Naive thymus-derived CD4-positive, alpha-beta T cell (primary cell): ENCODE measurements at regions of chr5 and their contacts with region 1.

Region 1: DNA sequence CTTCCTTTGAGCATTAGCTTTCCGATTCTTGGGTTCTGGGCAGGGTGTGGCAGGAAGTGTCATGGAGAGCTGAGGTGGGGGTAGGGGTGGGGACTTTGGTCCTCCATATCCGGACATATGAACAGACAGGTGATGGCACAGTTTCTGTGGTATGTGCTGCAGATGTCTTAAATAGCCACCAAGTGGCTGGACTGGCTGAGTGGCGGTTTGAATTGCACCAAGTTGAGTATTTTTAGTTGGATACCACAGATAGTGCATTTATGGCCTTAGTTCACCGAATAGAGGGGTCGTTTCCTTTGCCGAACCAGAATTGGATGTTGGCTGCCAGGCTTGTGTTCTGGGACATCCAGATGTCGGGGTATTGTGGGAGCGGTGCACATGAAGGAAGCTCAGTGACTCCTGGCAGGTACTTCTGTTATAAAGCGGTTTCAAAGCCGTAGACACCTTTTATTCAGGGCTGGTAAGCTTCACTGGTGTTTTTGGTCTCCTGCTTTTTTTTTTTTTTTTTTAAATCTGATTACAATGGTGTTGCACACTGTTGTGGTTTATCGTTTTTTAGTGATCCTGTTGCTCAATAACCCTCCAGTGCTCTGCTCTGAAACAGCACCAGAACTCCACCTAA is 15.1 kb upstream of the TNFAIP8 start:
- DNase-seq: peak in 7 of 9 donors; percentile 57 to 72 (median 64)
- ATAC-seq: peak; percentile 71
- H3K4me3 ChIP-seq: peak overlapping the region; percentile 33
- H3K4me3 Mint-ChIP-seq: peak overlapping the region; percentile 64 to 94 (median 86)
- H3K27ac ChIP-seq: peak overlapping the region; percentile 78
- H3K27ac Mint-ChIP-seq: peak overlapping the region; percentile 84 to 99 (median 94)
- H3K4me1 ChIP-seq: peaks cover 91 to 95% of the 10 kb centered on the region in 2 donors
- H3K4me1 Mint-ChIP-seq: peaks cover 78 to 98% (median 97%) of the 10 kb centered on the region in 7 donors
- H3K27me3 ChIP-seq: no peaks in the 10 kb centered on the region
- H3K27me3 Mint-ChIP-seq: no peaks in the 10 kb centered on the region

Region 2: GRCh38 chr5:119022017-119022745 is 318.5 kb before region 1 on chr5:
- CTCF ChIA-PET with region 1: interaction called, 5 read pairs
- POLR2A ChIA-PET with region 1: interaction called, 3 read pairs
- intact Hi-C with region 1: loop called in 1 of 2 experiments (anchors 5 kb)
- DNase-seq: peak in 6 of 9 donors; percentile 12 to 60 (median 54)
- ATAC-seq: peak; percentile 67
- H3K4me3 ChIP-seq: no peak overlapping the region
- H3K4me3 Mint-ChIP-seq: no peak overlapping the region
- H3K27ac ChIP-seq: no peak overlapping the region
- H3K27ac Mint-ChIP-seq: peak overlapping the region in 3 of 9 donors; percentile 46 to 60 (median 47)
- H3K4me1 ChIP-seq: no peaks in the 10 kb centered on the region
- H3K4me1 Mint-ChIP-seq: peaks cover 0 to 6% (median 2%) of the 10 kb centered on the region in 7 donors
- H3K27me3 ChIP-seq: no peaks in the 10 kb centered on the region
- H3K27me3 Mint-ChIP-seq: no peaks in the 10 kb centered on the region

Region 3: GRCh38 chr5:119274767-119275130 is 66.0 kb before region 1 on chr5:
- CTCF ChIA-PET with region 1: interaction called, 7 read pairs
- POLR2A ChIA-PET with region 1: interaction called, 58 read pairs
- intact Hi-C with region 1: loop called in 1 of 2 experiments (anchors 1 kb)
- DNase-seq: peak in 1 of 9 donors; percentile 79
- ATAC-seq: peak; percentile 45
- H3K4me3 ChIP-seq: peak overlapping the region; percentile 52
- H3K4me3 Mint-ChIP-seq: peak overlapping the region; percentile 86 to 100 (median 98)
- H3K27ac ChIP-seq: peak overlapping the region; percentile 85
- H3K27ac Mint-ChIP-seq: peak overlapping the region; percentile 73 to 99 (median 95)
- H3K4me1 ChIP-seq: peaks cover 74 to 81% of the 10 kb centered on the region in 2 donors
- H3K4me1 Mint-ChIP-seq: peaks cover 84 to 98% (median 91%) of the 10 kb centered on the region in 7 donors
- H3K27me3 ChIP-seq: no peaks in the 10 kb centered on the region
- H3K27me3 Mint-ChIP-seq: peaks cover 0 to 2% (median 0%) of the 10 kb centered on the region in 5 donors

Region 4: DNA sequence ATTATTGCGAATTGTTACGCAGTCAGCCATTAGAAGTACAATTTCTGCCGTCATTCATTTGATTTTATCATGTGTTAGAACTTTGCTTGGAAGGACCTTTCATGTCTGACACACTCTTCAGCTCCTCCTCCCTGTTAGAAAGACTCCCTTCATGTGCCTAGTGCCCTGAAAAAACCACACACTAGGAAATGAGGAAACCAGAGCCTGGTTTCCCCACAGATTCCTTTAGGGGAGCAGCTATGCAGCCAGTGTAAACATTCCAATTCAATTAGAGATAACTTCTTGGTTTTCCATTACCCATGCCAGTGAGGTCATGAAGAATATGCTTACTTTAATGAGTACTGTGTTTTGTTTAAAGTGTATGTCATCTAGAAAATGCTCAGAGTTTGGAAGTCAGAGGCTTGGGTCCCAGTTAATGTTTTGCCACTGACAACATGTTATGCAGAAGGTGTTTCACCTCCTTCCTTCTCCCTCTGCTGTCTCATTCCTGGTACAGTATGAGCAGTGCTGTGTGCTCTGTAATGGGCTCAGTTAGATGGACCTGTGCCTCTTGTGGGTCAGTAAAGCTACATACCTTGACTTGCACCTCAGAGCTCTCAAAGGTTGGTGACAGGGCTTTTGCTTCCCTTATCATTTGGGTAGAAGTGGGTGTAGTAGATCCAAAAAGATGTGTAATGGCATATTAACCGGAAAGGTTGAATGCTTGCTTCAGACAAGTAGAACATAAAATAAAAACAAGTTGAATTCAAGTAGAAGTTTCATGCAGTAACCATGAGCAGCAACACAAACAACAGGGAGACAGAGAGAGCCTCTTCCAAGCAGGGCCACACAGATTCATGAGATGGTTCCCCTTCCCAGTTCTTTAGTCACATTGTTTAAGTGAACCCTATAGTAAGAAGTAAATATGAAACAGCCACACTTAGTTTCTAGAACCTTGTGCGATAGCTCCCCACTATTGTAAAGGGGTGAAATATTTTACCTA is 37.5 kb before region 1 on chr5:
- CTCF ChIA-PET with region 1: interaction called, 5 read pairs
- POLR2A ChIA-PET with region 1: interaction called, 33 read pairs
- intact Hi-C with region 1: loop called in 1 of 2 experiments (anchors 5 kb)
- DNase-seq: peak in 3 of 9 donors; percentile 36 to 66 (median 51)
- ATAC-seq: peak; percentile 78
- H3K4me3 ChIP-seq: peak overlapping the region; percentile 24
- H3K4me3 Mint-ChIP-seq: peak overlapping the region; percentile 63 to 93 (median 76)
- H3K27ac ChIP-seq: peak overlapping the region; percentile 74
- H3K27ac Mint-ChIP-seq: peak overlapping the region; percentile 85 to 100 (median 98)
- H3K4me1 ChIP-seq: peaks cover 81 to 82% of the 10 kb centered on the region in 2 donors
- H3K4me1 Mint-ChIP-seq: peaks cover 57 to 97% (median 94%) of the 10 kb centered on the region in 7 donors
- H3K27me3 ChIP-seq: no peaks in the 10 kb centered on the region
- H3K27me3 Mint-ChIP-seq: no peaks in the 10 kb centered on the region

Region 5: GRCh38 chr5:119328753-119329602 is 11.7 kb before region 1 on chr5:
- CTCF ChIA-PET with region 1: interaction called, 6 read pairs
- POLR2A ChIA-PET with region 1: interaction called, 19 read pairs
- intact Hi-C with region 1: loop called (anchors 1 kb)
- DNase-seq: peak in 4 of 9 donors; percentile 30 to 71 (median 37)
- ATAC-seq: peak; percentile 59
- H3K4me3 ChIP-seq: peak overlapping the region; percentile 40
- H3K4me3 Mint-ChIP-seq: peak overlapping the region; percentile 73 to 97 (median 81)
- H3K27ac ChIP-seq: peak overlapping the region; percentile 78
- H3K27ac Mint-ChIP-seq: peak overlapping the region; percentile 84 to 99 (median 95)
- H3K4me1 ChIP-seq: peaks cover 72 to 86% of the 10 kb centered on the region in 2 donors
- H3K4me1 Mint-ChIP-seq: peaks cover 63 to 98% (median 90%) of the 10 kb centered on the region in 7 donors
- H3K27me3 ChIP-seq: no peaks in the 10 kb centered on the region
- H3K27me3 Mint-ChIP-seq: no peaks in the 10 kb centered on the region

Region 6: DNA sequence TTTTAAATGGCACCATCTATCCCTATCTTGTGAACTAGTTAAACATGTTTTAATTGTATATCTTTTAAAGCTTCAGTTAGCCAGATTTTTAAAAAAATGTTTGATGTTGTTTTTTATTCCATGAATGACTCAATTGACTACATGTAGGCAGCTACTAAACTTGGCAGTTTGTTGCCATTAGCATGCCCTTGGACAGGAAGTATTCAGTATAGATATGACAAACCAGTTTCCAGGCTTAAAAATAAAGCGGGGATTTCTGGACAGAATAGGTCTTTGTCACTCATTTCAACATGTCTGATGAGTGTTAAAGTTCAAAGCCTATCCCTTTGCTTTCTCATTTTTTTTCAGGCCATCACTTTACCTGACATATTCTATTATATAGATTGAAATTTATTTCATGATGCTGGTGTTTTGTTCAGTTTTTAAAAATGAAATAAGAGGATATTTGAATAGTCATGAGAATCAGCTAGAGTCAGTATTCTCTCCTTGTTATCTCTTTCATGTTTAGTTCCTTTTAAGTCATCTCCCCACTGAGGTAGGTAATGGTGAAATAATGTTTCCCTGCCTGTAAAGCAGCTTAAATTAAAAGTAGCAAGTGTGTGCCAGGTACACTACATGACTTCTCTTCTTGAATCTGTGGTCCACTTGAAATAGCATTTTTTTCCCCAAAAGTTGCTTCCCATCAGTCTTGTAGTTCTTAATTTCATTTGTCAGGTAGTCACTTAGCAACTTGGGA is 27.0 kb after region 1 on chr5:
- CTCF ChIA-PET with region 1: no interaction called
- POLR2A ChIA-PET with region 1: interaction called, 12 read pairs
- intact Hi-C with region 1: loop called in 1 of 2 experiments (anchors 1 kb)
- DNase-seq: peak in 2 of 9 donors; percentile 20 to 46
- ATAC-seq: peak; percentile 74
- H3K4me3 ChIP-seq: no peak overlapping the region
- H3K4me3 Mint-ChIP-seq: peak overlapping the region; percentile 52 to 78 (median 73)
- H3K27ac ChIP-seq: peak overlapping the region; percentile 55
- H3K27ac Mint-ChIP-seq: peak overlapping the region; percentile 24 to 96 (median 84)
- H3K4me1 ChIP-seq: peaks cover 54 to 76% of the 10 kb centered on the region in 2 donors
- H3K4me1 Mint-ChIP-seq: peaks cover 49 to 89% (median 84%) of the 10 kb centered on the region in 7 donors
- H3K27me3 ChIP-seq: no peaks in the 10 kb centered on the region
- H3K27me3 Mint-ChIP-seq: no peaks in the 10 kb centered on the region